GM10248 (cell line): ENCODE measurements at regions of chr6 and their contacts with region 1.

Region 1: GRCh38 chr6:107847844-107848802 is 24.0 kb upstream of the SCML4 start:
- DNase-seq: peak; percentile 88
- CTCF ChIP-seq: peak; percentile 88

Region 2: GRCh38 chr6:107361753-107362604 is 486.1 kb before region 1 on chr6:
- CTCF ChIA-PET with region 1: no interaction called
- POLR2A ChIA-PET with region 1: no interaction called
- DNase-seq: no peak
- CTCF ChIP-seq: no peak

Region 3: GRCh38 chr6:107674995-107675738 is 173.0 kb before region 1 on chr6:
- CTCF ChIA-PET with region 1: interaction called, 75 read pairs
- POLR2A ChIA-PET with region 1: no interaction called
- DNase-seq: peak; percentile 88
- CTCF ChIP-seq: peak; percentile 96

Region 4: DNA sequence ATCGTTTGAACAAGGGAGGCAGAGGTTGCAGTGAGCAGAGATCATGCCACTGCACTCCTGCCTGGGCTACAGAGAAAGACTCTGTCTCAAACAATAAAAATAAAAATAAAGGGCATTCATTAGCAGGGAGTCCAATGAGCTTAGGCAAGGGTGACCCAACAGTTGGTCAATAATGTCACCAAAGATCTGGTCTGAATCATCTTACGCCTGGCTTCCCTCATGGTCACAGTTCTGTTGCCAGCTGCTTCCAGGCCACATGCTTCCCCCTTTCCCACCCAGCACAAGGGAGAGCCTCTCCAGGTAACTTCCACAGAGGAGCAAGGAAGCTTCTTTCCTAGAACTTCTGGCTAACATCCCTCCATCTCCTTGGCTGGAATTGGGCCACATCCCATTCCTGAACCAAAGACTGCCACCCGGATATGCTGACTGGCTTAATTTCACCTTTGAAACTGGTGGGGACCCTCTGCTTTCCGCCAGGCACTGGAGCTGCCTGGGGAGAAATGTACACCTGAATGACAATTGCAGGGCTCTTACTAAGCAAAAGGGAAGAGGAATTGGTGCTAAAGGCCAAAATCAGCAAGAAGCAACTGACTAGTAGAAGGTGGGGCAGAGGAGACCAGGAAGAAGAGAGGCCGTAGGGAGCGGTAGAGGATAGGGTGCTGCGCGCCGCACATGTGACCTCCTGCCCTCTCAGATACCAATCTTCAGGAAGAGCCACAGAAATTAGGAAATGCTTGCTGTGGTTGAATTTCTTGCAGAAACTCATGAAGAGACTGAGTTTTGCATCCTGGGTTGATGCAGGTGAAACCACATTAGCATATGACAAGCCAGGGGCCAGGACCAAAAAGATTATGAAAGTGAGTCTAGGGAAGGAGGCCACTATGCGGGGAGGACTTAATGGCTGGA is 15.7 kb before region 1 on chr6:
- CTCF ChIA-PET with region 1: interaction called, 19 read pairs
- POLR2A ChIA-PET with region 1: no interaction called
- DNase-seq: no peak
- CTCF ChIP-seq: no peak

Region 5: GRCh38 chr6:107866606-107867301 is 18.6 kb after region 1 on chr6:
- CTCF ChIA-PET with region 1: interaction called, 43 read pairs
- POLR2A ChIA-PET with region 1: no interaction called
- DNase-seq: peak; percentile 50
- CTCF ChIP-seq: peak; percentile 40

Region 6: DNA sequence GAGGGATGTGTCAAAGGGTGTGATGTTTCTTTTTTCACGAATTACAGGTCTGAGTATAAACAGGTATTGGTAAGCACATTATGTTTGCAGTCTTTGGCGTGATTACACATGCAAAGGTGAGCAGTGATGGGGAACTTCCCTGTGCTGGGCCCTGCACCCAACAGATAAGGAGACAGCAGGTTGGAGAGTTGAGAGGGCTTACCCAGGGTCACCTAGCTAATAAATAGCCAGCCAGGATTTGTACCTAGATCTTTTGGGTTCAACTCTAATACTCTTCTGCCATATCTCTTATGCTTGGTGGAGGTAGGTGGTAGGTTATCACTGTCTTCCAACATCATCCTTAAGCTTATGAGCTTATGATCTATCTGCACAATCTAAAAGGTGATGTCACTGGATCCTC is 493.2 kb after region 1 on chr6:
- CTCF ChIA-PET with region 1: no interaction called
- POLR2A ChIA-PET with region 1: no interaction called
- DNase-seq: no peak
- CTCF ChIP-seq: no peak